Activated B cell treated with CpG ODN at 0.5 μM for 24 hours (primary cell): ENCODE measurements at regions of chr11 and their contacts with region 1.

Region 1: DNA sequence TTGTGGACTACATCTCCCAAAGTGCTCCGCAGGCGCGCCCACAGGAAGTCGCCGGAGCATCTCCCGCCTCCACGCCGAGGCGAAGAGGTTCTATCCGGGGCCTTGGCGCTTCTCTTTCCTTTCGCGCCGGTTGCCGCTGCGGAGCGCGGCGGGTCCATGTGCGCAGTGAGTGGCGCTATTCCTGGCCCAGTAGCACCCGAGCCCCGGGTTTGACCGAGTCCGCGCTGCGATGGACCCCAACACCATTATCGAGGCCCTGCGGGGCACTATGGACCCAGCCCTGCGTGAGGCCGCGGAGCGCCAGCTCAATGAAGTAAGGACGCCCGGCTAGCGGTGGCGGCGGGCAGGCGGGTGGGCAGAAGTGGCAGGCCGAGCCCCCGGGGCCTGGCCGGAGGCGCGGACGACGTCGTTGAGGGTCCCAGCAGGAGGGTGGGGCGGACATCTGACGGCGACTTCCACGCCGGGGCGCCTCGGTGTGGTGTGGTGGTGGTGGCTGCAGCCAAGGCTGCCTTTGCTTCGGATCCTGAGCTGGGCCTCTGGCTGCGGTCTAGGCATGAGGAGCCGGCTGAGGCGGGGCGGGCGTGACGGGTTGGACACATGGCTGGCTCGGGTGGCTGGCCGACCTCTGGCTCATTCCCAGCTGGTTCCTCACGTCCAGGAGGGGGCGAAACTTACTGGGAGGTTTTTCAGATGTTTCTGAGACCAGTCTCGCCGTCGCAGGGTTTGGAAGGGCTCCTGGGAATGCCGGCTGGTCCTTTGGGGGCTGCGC is at the start of gene IPO7:
- DNase-seq: peak; percentile 75
- ATAC-seq: peak; percentile 98
- H3K4me3 Mint-ChIP-seq: peak within 1 kb of the TSS; percentile 94
- H3K27ac Mint-ChIP-seq: peak within 1 kb of the TSS; percentile 90
- H3K4me1 Mint-ChIP-seq: peaks cover 36% of the 10 kb centered on the region
- H3K27me3 Mint-ChIP-seq: no peaks in the 10 kb centered on the region
- CTCF ChIP-seq: no peak
- total RNA-seq, gene IPO7: 95.7 and 96.3 TPM in 2 replicates

Region 2: DNA sequence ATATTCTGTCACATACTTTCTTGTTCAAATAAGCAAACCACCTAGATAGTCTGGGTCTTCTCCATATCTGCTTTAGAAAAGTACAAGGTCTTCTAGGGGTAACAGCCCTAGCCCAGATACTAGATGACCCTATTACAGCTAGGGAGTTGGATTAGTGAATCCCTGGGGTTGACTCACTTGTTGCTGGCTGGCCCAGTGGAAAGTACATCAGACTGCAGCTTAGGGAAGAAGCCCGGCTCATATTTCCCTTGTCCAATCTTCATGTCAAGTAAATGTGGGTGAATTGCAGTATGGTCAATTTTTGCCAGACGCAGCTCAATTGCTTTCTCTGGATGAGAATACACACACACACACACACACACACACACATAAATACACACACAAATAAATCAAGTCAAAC is 214.3 kb before region 1 on chr11:
- CTCF ChIA-PET with region 1: no interaction called
- POLR2A ChIA-PET with region 1: no interaction called
- intact Hi-C with region 1: loop called (anchors 5 kb)
- DNase-seq: no peak
- ATAC-seq: no peak
- H3K4me3 Mint-ChIP-seq: no peak overlapping the region
- H3K27ac Mint-ChIP-seq: no peak overlapping the region
- H3K4me1 Mint-ChIP-seq: no peaks in the 10 kb centered on the region
- H3K27me3 Mint-ChIP-seq: no peaks in the 10 kb centered on the region
- CTCF ChIP-seq: no peak

Region 3: DNA sequence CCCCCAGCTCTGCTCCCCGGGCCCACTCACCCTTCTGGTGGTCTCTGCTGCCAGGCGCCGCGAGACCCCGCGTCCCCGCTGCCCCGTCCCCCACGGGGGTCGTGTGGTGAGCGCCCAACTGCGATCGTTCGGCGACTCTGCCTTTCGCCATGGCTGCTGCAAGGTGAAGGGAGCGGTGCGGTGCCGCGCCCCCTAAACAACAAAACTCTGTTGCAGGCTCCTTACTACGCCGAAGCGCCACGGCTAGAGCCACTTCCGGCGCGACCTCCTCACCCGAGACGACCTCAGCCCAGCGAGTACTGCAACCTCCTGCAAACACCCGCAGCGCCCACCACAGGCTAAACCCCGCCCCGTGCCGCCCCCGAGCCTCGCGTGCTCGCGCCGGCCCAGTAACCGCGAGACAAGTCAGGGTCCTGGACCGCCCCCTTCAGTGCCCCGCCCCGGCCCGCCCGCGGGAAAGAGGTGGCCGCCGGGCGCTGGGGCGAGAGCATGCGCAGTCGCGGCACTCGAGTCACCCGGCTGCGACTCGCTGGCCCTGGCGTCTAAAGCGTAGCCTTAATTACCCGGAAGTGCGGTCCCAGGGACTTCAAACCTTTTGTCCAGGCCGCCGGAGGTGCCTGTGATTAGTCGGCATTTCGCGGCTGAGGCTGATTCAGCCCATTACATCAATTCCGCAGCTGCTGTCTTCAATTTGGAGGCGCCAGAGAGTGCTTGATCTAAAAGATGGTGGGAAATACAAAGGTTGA is 70.3 kb before region 1 on chr11 and contains the start of gene TMEM41B:
- CTCF ChIA-PET with region 1: interaction called, 9 read pairs
- POLR2A ChIA-PET with region 1: interaction called, 31 read pairs
- intact Hi-C with region 1: loop called (anchors 1 kb)
- DNase-seq: peak; percentile 100
- ATAC-seq: peak; percentile 96
- H3K4me3 Mint-ChIP-seq: peak within 1 kb of the TSS; percentile 98
- H3K27ac Mint-ChIP-seq: peak within 1 kb of the TSS; percentile 95
- H3K4me1 Mint-ChIP-seq: peaks cover 49% of the 10 kb centered on the region
- H3K27me3 Mint-ChIP-seq: peaks cover 4% of the 10 kb centered on the region
- CTCF ChIP-seq: no peak
- total RNA-seq, gene TMEM41B: 19.4 and 21.7 TPM in 2 replicates

Region 4: GRCh38 chr11:9363954-9364912 is 20.5 kb before region 1 on chr11:
- CTCF ChIA-PET with region 1: no interaction called
- POLR2A ChIA-PET with region 1: interaction called, 29 read pairs
- intact Hi-C with region 1: loop called (anchors 1 kb)
- DNase-seq: peak; percentile 74
- ATAC-seq: peak; percentile 97
- H3K4me3 Mint-ChIP-seq: peak overlapping the region; percentile 86
- H3K27ac Mint-ChIP-seq: peak overlapping the region; percentile 89
- H3K4me1 Mint-ChIP-seq: peaks cover 8% of the 10 kb centered on the region
- H3K27me3 Mint-ChIP-seq: no peaks in the 10 kb centered on the region
- CTCF ChIP-seq: no peak

Region 5: DNA sequence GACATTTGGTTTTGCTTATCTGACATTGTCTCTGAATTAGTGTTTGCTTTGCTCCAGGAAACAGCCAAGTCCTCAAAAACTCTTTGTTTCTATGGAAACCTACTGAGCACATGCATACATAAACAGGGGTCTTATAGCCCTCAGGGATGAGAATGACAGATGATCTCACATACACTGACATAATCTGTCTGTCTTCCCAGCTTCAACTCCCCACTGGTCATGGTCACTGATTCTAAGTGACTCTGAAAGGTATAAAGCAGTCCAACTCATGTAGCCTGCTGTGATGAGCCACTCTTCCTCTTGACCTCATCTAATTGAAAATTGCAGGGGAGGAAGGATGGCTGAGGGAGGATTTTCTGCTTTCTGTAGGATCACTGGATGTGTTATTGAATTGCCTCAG is 88.7 kb after region 1 on chr11:
- CTCF ChIA-PET with region 1: no interaction called
- POLR2A ChIA-PET with region 1: interaction called, 10 read pairs
- intact Hi-C with region 1: no loop called
- DNase-seq: no peak
- ATAC-seq: no peak
- H3K4me3 Mint-ChIP-seq: no peak overlapping the region
- H3K27ac Mint-ChIP-seq: no peak overlapping the region
- H3K4me1 Mint-ChIP-seq: no peaks in the 10 kb centered on the region
- H3K27me3 Mint-ChIP-seq: no peaks in the 10 kb centered on the region
- CTCF ChIP-seq: no peak

Region 6: DNA sequence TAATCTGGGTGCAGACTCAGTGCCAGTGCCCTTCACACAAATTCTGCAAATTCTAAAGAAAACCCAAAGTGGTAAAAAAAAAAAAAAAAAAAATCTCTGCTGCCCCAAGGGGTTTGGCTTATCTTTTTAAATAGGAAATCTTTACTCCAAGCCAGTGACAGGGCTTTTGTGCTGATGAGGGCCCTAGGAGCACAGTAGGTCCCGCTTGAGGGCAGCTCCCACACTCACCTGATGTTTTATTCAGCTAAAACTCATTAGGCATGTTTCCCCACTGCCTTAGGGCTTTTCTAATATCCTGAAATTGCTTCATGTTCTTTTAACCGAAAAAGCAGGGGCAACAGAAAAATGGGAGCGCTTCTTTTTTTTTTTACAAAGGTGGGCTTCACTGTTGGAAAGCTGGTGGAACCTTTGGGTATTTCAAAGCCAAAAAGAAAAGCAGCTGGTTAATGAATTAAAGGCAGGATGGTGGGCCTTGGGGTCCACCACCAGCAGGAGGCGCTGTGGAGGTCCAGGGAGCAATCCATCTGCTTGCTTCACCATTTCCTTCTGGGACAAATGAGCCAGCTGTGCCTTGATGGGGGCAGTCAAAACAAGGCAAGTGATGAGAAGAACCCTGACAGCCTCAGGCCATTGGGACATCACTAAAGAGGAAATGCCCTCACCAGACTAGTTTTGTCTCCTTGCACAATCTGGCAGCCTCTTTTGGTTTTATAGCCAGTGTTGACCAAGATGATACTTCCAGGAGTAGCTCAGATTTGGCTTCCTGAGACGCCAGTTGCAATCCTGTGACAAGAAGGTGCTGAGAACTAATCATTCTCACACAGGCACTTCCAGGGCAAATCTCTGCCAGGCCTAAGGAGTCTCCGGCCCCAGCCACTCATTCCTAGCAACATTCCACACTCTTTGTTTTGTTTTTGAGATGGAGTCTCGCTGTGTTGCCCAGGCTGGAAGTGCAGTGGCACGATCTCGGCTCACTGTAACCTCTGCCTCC is 150.4 kb after region 1 on chr11:
- CTCF ChIA-PET with region 1: no interaction called
- POLR2A ChIA-PET with region 1: no interaction called
- intact Hi-C with region 1: no loop called
- DNase-seq: peak; percentile 71
- ATAC-seq: peak; percentile 71
- H3K4me3 Mint-ChIP-seq: no peak overlapping the region
- H3K27ac Mint-ChIP-seq: no peak overlapping the region
- H3K4me1 Mint-ChIP-seq: peaks cover 5% of the 10 kb centered on the region
- H3K27me3 Mint-ChIP-seq: no peaks in the 10 kb centered on the region
- CTCF ChIP-seq: no peak

Region 7: GRCh38 chr11:9573052-9573774 is 188.5 kb after region 1 on chr11 and contains the start of gene WEE1:
- CTCF ChIA-PET with region 1: no interaction called
- POLR2A ChIA-PET with region 1: no interaction called
- intact Hi-C with region 1: loop called (anchors 1 kb)
- DNase-seq: peak; percentile 97
- ATAC-seq: peak; percentile 90
- H3K4me3 Mint-ChIP-seq: peak within 1 kb of the TSS; percentile 95
- H3K27ac Mint-ChIP-seq: peak within 1 kb of the TSS; percentile 85
- H3K4me1 Mint-ChIP-seq: peaks cover 69% of the 10 kb centered on the region
- H3K27me3 Mint-ChIP-seq: no peaks in the 10 kb centered on the region
- CTCF ChIP-seq: no peak
- total RNA-seq, gene WEE1: 29.4 and 33.7 TPM in 2 replicates